Activated CD8-positive, alpha-beta memory T cell treated with anti-CD3 and anti-CD28 coated beads, Interleukin-2, amount 10 ng/mL, durations not matched to agents 7 days and 5 days (primary cell): ENCODE measurements at regions of chr4 and their contacts with region 1.

Region 1: DNA sequence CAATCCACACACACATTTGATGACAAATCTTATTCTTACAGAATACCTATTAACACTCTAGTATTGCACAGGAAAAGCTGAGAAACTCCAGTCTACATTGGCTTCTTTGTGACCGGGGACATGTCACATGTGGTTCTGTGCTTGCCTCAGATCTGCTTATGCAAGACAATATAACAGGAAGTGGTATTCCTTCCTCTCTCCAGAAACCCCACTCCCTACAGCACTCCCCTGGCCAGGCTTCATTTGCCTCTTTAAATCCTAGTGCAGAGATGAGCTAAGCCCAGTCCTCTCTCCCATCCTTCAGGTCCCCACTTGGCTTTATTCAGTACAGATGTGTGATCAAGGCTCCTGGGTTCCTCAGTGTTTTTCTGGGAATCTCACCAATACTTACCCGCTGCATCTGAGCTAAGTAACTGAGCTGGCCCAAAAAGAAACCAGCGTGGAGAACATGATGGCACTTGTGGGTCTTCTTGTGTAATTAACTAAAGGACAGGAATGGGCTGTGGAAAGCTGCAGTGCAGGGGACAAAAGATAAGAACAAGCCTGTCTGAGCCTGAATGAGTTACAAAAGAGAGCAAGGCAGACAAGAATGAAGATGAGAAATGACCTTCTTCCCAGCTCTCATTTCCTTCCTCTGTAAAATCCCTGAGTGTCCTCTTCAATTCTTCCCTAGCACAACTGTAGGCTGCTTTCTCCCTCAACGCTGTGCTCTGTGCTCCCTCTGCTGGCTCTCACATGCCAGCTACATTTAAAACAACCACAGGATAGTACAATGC is 105.6 kb downstream of the HNRNPD start:
- DNase-seq: peak; percentile 59
- ATAC-seq: peak; percentile 91
- H3K4me3 Mint-ChIP-seq: no peak overlapping the region
- H3K27ac Mint-ChIP-seq: no peak overlapping the region
- H3K4me1 Mint-ChIP-seq: peaks cover 10% of the 10 kb centered on the region
- H3K27me3 Mint-ChIP-seq: peaks cover 3% of the 10 kb centered on the region

Region 2: DNA sequence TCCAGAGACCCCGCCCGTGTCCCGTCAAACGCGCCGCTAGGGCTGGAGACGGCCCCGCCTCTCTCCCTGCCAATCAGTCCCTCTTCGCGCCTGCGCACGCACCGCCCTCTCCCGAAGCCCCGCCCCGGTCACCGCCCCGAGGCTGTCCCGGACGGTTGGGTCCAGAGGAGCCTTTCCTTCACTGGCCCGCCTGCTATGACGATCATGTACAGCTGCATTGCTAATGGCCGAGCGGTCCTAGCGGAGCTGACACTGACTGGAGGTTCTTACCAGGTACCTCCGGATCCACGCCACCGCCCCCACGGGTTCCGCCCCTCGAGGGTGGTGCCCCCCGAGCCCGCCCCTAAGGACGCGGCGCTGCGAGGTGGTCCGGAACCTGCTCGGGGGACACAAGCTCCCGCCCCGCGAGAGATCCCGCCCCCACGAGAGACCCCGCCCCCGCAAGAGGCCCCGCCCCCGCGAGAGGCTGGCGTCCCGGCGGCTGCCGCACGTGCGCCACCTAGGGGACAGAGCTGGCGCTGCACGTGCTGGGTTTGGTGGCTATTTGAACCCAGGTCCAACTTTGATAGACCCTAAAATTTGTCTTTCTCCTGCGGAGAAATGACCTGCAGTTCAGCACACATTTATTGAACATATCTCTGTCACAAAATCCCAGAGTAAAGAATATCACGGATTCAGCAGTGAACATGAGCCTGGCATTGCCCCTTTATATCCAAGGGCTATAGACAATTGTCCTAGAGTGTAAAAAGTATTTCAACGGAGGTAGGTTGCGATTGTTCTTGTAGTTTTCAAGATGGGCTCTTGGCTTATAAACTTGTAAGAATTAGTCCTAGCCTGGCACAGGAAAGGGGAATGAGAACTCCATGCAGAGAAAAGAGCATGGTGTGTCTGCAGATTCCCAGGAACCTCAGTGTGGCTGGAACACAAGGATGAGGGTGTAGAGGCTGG is 16.9 kb after region 1 on chr4:
- CTCF ChIA-PET with region 1: interaction called, 14 read pairs
- DNase-seq: peak; percentile 99
- ATAC-seq: peak; percentile 98
- H3K4me3 Mint-ChIP-seq: peak overlapping the region; percentile 72
- H3K27ac Mint-ChIP-seq: peak overlapping the region; percentile 80
- H3K4me1 Mint-ChIP-seq: peaks cover 13% of the 10 kb centered on the region
- H3K27me3 Mint-ChIP-seq: peaks cover 24% of the 10 kb centered on the region

Region 3: GRCh38 chr4:82331814-82332213 is 63.6 kb after region 1 on chr4:
- CTCF ChIA-PET with region 1: no interaction called
- DNase-seq: no peak
- ATAC-seq: no peak
- H3K4me3 Mint-ChIP-seq: no peak overlapping the region
- H3K27ac Mint-ChIP-seq: no peak overlapping the region
- H3K4me1 Mint-ChIP-seq: peaks cover 4% of the 10 kb centered on the region
- H3K27me3 Mint-ChIP-seq: peaks cover 8% of the 10 kb centered on the region

Region 4: DNA sequence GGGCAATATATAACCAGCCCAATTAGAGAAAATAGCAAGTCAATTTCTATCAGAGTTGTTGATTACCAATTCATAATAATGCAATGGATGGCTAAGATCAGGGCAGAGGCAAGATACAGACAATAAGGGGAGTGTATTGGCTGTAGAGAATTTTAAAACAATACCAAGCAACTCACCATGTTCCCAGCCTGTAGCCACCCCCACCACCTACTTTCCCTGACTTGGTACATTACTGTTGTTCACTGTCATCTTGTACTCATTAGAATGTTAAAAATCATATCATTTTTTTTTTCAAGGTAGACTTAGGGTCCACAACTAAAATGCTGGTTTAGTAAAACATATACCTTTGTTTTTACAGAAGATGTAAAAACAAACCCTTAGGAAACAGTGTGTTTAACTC is 77.9 kb after region 1 on chr4:
- CTCF ChIA-PET with region 1: no interaction called
- DNase-seq: no peak
- ATAC-seq: no peak
- H3K4me3 Mint-ChIP-seq: no peak overlapping the region
- H3K27ac Mint-ChIP-seq: no peak overlapping the region
- H3K4me1 Mint-ChIP-seq: peaks cover 6% of the 10 kb centered on the region
- H3K27me3 Mint-ChIP-seq: no peaks in the 10 kb centered on the region